ENCODE measurements at regions of chr20 and their contacts with region 1.

Region 1: GRCh38 chr20:32411955-32412706 is 54.0 kb downstream of the ASXL1 start:
- DNase-seq: peak; percentile 28
- H3K4me3 ChIP-seq: no peak overlapping the region
- H3K27ac ChIP-seq: no peak overlapping the region
- H3K4me1 ChIP-seq: peaks cover 6% of the 10 kb centered on the region
- CTCF ChIP-seq: no peak

Region 2: GRCh38 chr20:32302507-32302872 is 109.6 kb before region 1 on chr20:
- CTCF ChIA-PET with region 1: no interaction called
- POLR2A ChIA-PET with region 1: no interaction called
- intact Hi-C with region 1: no loop called
- DNase-seq: no peak
- H3K4me3 ChIP-seq: no peak overlapping the region
- H3K27ac ChIP-seq: no peak overlapping the region
- H3K4me1 ChIP-seq: no peaks in the 10 kb centered on the region
- CTCF ChIP-seq: no peak

Region 3: DNA sequence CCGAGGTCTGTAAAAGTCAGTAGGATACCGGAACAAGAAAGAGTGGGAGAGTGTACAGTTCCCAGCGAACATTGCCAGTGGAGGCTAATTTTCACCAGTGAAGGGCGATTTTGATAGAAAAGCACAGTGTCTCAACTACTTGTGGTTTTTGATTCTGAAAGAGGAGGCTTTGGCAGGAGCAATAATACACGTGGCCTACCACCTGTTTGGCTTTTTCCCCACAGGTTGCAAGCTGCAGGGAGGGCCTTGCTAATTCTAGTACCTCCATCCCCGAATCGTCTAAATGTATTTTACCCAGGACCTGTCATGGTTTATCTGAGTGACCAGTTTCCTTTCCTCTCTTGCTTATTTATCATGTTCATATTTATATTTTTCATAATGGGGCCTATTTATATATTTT is 443.3 kb after region 1 on chr20:
- CTCF ChIA-PET with region 1: no interaction called
- POLR2A ChIA-PET with region 1: interaction called, 10 read pairs
- intact Hi-C with region 1: no loop called
- DNase-seq: no peak
- H3K4me3 ChIP-seq: no peak overlapping the region
- H3K27ac ChIP-seq: no peak overlapping the region
- H3K4me1 ChIP-seq: no peaks in the 10 kb centered on the region
- CTCF ChIP-seq: no peak